ENCODE measurements at regions of chr5 and their contacts with region 1.

Region 1: GRCh38 chr5:147822686-147823491 is 8.6 kb downstream of the SPINK1 start:
- DNase-seq: peak in 1 of 2 experiments; percentile 31
- H3K4me3 ChIP-seq: no peak overlapping the region
- H3K27ac ChIP-seq: no peak overlapping the region
- H3K4me1 ChIP-seq: no peaks in the 10 kb centered on the region
- H3K27me3 ChIP-seq: no peaks in the 10 kb centered on the region
- CTCF ChIP-seq: peak in 2 of 3 experiments; percentile 90 to 94; a peak in 3 of 4 replicates
- EP300 ChIP-seq: no peak
- POLR2A ChIP-seq: no peak
- RAD21 ChIP-seq: peak; percentile 99 to 100

Region 2: GRCh38 chr5:147628058-147628895 is 194.6 kb before region 1 on chr5:
- CTCF ChIA-PET with region 1: interaction called, 53 read pairs
- POLR2A ChIA-PET with region 1: interaction called, 4 read pairs
- DNase-seq: peak; percentile 25 to 82
- H3K4me3 ChIP-seq: no peak overlapping the region
- H3K27ac ChIP-seq: no peak overlapping the region
- H3K4me1 ChIP-seq: no peaks in the 10 kb centered on the region; a peak in 1 of 7 replicates
- H3K27me3 ChIP-seq: no peaks in the 10 kb centered on the region
- CTCF ChIP-seq: peak in 2 of 3 experiments; percentile 77 to 88; a peak in 3 of 4 replicates
- EP300 ChIP-seq: no peak
- POLR2A ChIP-seq: no peak
- RAD21 ChIP-seq: peak; percentile 86 to 93

Region 3: GRCh38 chr5:147635882-147636728 is 186.8 kb before region 1 on chr5:
- CTCF ChIA-PET with region 1: interaction called, 53 read pairs
- POLR2A ChIA-PET with region 1: no interaction called
- DNase-seq: no peak
- H3K4me3 ChIP-seq: no peak overlapping the region
- H3K27ac ChIP-seq: no peak overlapping the region; the same call in 1 of the 2 replicates
- H3K4me1 ChIP-seq: no peaks in the 10 kb centered on the region; a peak in 1 of 7 replicates
- H3K27me3 ChIP-seq: peaks cover 0 to 1% (median 0%) of the 10 kb centered on the region in 4 experiments; a peak in 1 of 7 replicates
- CTCF ChIP-seq: no peak
- EP300 ChIP-seq: no peak
- POLR2A ChIP-seq: no peak
- RAD21 ChIP-seq: no peak

Region 4: DNA sequence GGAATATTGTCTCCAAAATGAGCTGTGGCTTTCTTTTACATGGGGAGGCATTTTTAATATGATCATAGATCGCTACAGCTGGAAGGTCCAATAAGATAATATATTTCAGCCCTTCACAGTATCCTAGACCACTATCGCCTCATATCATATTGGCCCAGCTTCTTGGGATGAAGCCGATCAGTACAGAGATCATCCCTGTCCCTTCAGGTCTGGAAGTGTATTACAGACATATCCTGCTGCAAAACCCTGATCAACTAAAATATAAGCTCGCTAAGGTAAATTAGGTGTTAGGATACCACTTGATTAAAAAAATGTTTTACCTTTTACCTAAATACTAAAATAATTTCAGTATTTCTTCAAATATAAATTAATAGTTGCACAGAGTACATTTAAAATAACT is 82.0 kb before region 1 on chr5:
- CTCF ChIA-PET with region 1: interaction called, 15 read pairs
- POLR2A ChIA-PET with region 1: no interaction called
- DNase-seq: no peak
- H3K4me3 ChIP-seq: no peak overlapping the region
- H3K27ac ChIP-seq: no peak overlapping the region
- H3K4me1 ChIP-seq: no peaks in the 10 kb centered on the region
- H3K27me3 ChIP-seq: no peaks in the 10 kb centered on the region
- CTCF ChIP-seq: peak in 1 of 3 experiments; percentile 17; a peak in 1 of 4 replicates
- EP300 ChIP-seq: no peak
- POLR2A ChIP-seq: no peak
- RAD21 ChIP-seq: no peak

Region 5: GRCh38 chr5:147809830-147810666 is 12.8 kb before region 1 on chr5:
- CTCF ChIA-PET with region 1: interaction called, 12 read pairs
- POLR2A ChIA-PET with region 1: no interaction called
- DNase-seq: peak in 1 of 2 experiments; percentile 9
- H3K4me3 ChIP-seq: no peak overlapping the region
- H3K27ac ChIP-seq: no peak overlapping the region
- H3K4me1 ChIP-seq: no peaks in the 10 kb centered on the region
- H3K27me3 ChIP-seq: no peaks in the 10 kb centered on the region
- CTCF ChIP-seq: no peak
- EP300 ChIP-seq: no peak
- POLR2A ChIP-seq: no peak
- RAD21 ChIP-seq: no peak

Region 6: GRCh38 chr5:147898875-147899401 is 76.0 kb after region 1 on chr5:
- CTCF ChIA-PET with region 1: no interaction called
- POLR2A ChIA-PET with region 1: no interaction called
- DNase-seq: no peak
- H3K4me3 ChIP-seq: no peak overlapping the region
- H3K27ac ChIP-seq: no peak overlapping the region
- H3K4me1 ChIP-seq: peaks cover 0 to 4% (median 0%) of the 10 kb centered on the region in 4 experiments; a peak in 1 of 7 replicates
- H3K27me3 ChIP-seq: peaks cover 0 to 1% (median 0%) of the 10 kb centered on the region in 4 experiments; a peak in 1 of 7 replicates
- CTCF ChIP-seq: no peak
- EP300 ChIP-seq: no peak
- POLR2A ChIP-seq: no peak
- RAD21 ChIP-seq: no peak

Measured in H1 (cell line).